Posterior vena cava (tissue), 2 donors: ENCODE measurements at regions of chr2 and their contacts with region 1.

Region 1: DNA sequence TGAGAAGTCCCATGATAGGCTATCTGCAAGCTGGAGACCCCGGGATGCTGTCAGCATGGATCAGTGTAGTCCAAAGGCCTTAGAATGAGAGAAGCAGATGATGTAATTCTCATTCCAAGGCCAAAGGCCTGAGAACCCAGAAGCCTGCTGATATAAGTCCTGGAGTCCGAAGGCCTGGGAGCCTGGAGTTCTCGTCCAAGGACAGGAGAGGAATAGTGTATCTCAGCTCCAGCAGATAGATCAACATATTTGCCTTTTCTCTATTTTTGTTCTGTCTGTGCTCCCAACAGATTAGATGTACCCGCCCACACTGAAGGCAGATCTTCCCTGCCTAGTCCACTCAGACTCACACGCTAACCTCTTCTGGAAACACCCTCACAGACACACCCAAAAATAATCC is 454.9 kb upstream of the CHAC2 start:
- DNase-seq: no peak

Region 2: DNA sequence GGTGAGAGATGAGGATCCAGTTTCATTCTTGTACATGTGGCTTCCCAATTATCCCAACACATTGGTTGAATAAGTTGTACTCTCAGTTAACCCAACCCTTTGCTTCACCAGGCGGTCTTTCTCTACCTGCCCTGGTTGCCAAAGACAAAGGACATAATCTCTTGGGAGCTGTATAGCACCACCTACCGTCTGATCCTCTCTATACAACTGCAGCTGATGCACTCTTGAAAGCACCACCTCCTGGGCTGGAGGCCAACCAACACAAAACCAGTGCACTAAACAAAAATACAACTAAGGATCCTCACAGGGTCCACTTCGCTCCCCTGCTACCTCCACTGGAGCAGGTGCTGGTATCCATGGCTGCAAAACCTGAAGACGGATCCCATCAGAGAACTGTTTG is 1807.2 kb before region 1 on chr2:
- intact Hi-C with region 1: loop called in 1 of 2 experiments (anchors 5 kb)
- DNase-seq: no peak